AG04450 (cell line): ENCODE measurements at regions of chr15 and their contacts with region 1.

Region 1: GRCh38 chr15:92903941-92904831 is 4.1 kb downstream of the CHD2 start:
- DNase-seq: peak; percentile 97
- H3K4me3 ChIP-seq: peak overlapping the region; percentile 74
- H3K27ac ChIP-seq: peak overlapping the region; percentile 97
- H3K27me3 ChIP-seq: no peaks in the 10 kb centered on the region
- CTCF ChIP-seq: no peak

Region 2: GRCh38 chr15:92611993-92612745 is 292.0 kb before region 1 on chr15:
- CTCF ChIA-PET with region 1: no interaction called
- POLR2A ChIA-PET with region 1: no interaction called
- DNase-seq: no peak
- H3K4me3 ChIP-seq: no peak overlapping the region
- H3K27ac ChIP-seq: no peak overlapping the region
- H3K27me3 ChIP-seq: no peaks in the 10 kb centered on the region
- CTCF ChIP-seq: no peak

Region 3: DNA sequence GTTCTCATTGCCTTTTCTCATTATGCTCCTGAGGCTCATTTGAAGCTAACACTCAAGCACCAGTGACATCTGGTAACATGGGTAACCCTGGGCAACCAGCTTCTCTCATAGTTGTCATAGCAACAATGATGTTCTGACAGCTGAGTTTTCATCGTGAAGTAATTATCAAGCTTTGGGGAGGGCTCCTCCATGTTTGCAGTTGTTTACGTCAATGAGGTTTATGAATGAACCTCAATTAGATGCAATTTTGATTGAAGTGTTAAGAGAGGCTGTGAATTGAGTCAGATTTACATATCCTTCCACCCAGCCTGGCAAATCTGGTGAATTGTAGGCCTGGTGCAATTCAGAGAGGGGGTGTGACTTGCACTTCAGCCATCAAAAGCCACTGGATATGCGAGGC is 123.3 kb before region 1 on chr15:
- CTCF ChIA-PET with region 1: no interaction called
- POLR2A ChIA-PET with region 1: no interaction called
- DNase-seq: no peak
- H3K4me3 ChIP-seq: no peak overlapping the region
- H3K27ac ChIP-seq: no peak overlapping the region
- H3K27me3 ChIP-seq: no peaks in the 10 kb centered on the region
- CTCF ChIP-seq: no peak

Region 4: GRCh38 chr15:92803847-92804609 is 100.2 kb before region 1 on chr15:
- CTCF ChIA-PET with region 1: interaction called, 12 read pairs
- POLR2A ChIA-PET with region 1: interaction called, 23 read pairs
- DNase-seq: peak; percentile 100
- H3K4me3 ChIP-seq: no peak overlapping the region
- H3K27ac ChIP-seq: peak overlapping the region; percentile 99
- H3K27me3 ChIP-seq: no peaks in the 10 kb centered on the region
- CTCF ChIP-seq: no peak

Region 5: DNA sequence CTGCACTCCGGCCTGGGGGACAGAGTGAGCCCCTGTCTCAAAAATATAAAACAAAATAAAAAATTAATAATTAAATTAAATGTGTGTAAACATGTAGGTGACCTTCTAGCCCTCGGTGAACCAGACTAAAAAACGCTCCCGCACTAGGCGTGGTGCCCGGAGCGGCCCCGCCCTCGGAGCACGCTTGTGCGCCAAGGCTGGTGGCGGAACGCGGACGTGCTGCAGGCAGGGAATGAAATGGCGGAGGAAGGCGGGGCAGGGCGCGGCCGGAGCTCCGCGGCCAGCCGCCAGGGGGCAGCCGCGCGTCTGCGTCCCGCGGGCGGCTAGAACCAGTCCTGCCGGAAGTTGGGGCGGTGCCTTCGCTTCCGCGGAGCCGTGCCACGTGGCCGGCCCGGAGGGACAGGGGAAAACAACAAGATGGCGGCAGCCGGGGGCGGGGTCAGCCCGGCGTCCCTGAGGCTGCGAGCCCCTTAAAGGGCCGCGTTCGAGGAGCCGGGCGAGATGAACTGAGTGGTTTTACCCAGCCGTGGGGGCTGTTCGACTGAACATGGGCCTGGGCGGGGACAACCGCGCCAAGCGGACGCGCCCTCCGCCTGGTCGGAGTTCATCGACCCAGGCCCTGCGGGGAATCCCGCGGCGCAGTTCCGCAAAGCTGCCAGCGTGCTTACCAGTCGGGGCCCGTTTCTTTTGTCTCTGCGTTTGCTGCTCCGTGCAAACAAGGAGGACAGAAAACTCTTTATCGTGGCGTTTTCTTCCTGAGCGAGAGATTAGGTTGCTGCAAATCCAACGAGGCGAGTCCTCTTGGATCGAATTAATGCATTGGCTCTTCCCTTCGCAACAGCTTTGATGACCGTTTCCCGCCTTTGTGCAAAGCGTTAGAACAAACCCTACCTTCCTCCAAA is 95.0 kb before region 1 on chr15:
- CTCF ChIA-PET with region 1: interaction called, 12 read pairs
- POLR2A ChIA-PET with region 1: interaction called, 23 read pairs
- DNase-seq: peak; percentile 94
- H3K4me3 ChIP-seq: peak overlapping the region; percentile 61
- H3K27ac ChIP-seq: peak overlapping the region; percentile 99
- H3K27me3 ChIP-seq: no peaks in the 10 kb centered on the region
- CTCF ChIP-seq: peak; percentile 73

Region 6: DNA sequence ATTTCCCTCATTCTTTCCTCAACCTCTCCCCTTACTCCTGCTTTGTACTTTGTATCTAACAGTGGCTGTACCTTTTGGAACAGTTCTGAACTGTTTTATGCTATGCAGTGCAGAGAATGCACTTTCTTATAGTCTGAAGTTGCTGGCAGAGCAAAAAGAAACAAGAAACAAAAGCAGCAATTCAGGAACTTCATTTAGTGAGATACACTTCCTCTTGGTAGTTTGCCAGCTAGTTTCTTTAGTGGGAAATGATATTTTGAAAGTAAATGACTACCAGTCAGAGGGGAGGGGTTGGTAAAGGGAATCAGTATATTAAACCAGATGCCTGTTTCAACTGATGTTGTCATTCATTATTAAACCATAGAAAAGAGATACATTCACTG is 59.1 kb before region 1 on chr15:
- CTCF ChIA-PET with region 1: no interaction called
- POLR2A ChIA-PET with region 1: no interaction called
- DNase-seq: no peak
- H3K4me3 ChIP-seq: no peak overlapping the region
- H3K27ac ChIP-seq: no peak overlapping the region
- H3K27me3 ChIP-seq: no peaks in the 10 kb centered on the region
- CTCF ChIP-seq: no peak

Region 7: DNA sequence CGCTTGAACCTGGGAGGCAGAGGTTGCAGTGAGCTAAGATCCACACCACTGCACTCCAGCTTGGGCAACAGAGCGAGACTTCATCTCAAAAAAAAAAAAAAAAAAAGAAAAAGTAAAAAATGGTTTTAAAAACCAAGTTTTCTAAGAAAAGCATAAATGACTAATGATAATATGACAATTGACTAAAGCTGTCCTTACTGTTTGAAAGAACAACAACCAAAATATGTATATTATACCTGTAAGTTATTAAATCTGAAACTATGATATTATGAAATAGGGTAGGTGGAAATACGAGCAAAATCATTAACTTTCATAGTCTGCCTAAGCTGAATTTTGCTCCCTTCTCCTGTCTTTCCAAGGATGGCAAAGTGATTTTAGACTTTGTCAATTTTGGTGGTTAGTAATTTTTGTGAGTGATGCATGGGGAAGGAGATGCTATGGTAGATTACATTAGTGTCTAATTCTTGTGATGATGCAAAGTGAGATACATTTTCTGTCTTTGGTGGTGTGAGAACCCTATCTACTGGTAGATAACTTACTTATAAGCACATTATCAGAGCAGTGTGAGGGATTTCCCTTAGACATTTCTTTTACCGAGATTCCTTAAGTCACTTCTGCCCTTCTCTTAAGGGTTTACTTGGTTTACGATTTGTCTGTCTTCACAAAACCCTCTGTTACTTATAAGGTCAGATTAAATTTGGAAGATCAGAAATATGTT is 14.6 kb before region 1 on chr15:
- CTCF ChIA-PET with region 1: interaction called, 10 read pairs
- POLR2A ChIA-PET with region 1: interaction called, 10 read pairs
- DNase-seq: no peak
- H3K4me3 ChIP-seq: no peak overlapping the region
- H3K27ac ChIP-seq: no peak overlapping the region
- H3K27me3 ChIP-seq: no peaks in the 10 kb centered on the region
- CTCF ChIP-seq: no peak

Region 8: DNA sequence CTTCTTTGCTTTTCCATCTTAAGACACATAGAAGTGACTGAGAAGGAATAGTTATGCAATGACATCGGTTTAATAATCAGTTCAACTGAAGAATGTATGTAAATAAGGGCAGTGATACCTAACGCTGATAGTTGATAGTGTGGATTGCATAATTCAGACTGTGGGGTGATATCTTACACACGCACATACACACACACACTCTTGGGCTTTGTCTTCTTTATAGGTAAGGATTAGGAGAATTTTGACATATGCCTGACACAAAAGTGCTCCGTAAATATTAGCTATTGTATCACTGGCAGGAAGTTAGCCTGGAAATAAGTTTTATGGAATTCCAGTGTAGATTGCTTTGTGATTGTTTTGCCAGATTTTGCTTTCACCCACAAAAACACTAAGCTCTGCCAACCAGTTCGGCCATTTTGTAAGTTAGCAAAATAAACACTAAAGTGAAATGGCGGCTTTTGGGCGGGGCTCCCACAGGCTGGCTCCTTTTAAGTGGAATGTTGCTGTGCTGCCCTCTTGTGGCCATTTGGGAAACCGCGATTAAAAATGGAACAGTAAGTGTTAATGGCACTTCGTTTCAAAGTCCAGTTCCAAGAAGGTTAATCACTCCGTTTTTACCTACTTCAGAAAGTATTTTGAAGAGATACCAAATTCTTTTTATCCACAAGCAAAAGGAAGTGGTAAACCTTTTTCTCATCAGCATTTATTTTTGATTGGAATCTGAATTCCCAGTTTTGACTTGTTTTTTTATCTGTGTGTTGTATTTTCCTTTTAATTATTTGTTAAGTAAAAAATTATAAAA is 13.6 kb after region 1 on chr15:
- CTCF ChIA-PET with region 1: interaction called, 54 read pairs
- POLR2A ChIA-PET with region 1: interaction called, 9 read pairs
- DNase-seq: peak; percentile 83
- H3K4me3 ChIP-seq: no peak overlapping the region
- H3K27ac ChIP-seq: peak overlapping the region; percentile 68
- H3K27me3 ChIP-seq: no peaks in the 10 kb centered on the region
- CTCF ChIP-seq: peak; percentile 83

Region 9: GRCh38 chr15:93274257-93274656 is 370.1 kb after region 1 on chr15:
- CTCF ChIA-PET with region 1: no interaction called
- POLR2A ChIA-PET with region 1: no interaction called
- DNase-seq: no peak
- H3K4me3 ChIP-seq: no peak overlapping the region
- H3K27ac ChIP-seq: no peak overlapping the region
- H3K27me3 ChIP-seq: no peaks in the 10 kb centered on the region
- CTCF ChIP-seq: no peak